Dendritic cell treated with granulocyte-macrophage colony-stimulating factor and Interleukin-4, amounts not matched to agents 40 ng/mL and 50 ng/mL, for 4 days (primary cell): ENCODE measurements at regions of chr1 and their contacts with region 1.

Region 1: GRCh38 chr1:112454316-112454715 is 54.4 kb upstream of the WNT2B start:
- H3K4me3 Mint-ChIP-seq: no peak overlapping the region
- H3K27ac Mint-ChIP-seq: no peak overlapping the region
- H3K4me1 Mint-ChIP-seq: peaks cover 21% of the 10 kb centered on the region
- H3K27me3 Mint-ChIP-seq: no peaks in the 10 kb centered on the region

Region 2: DNA sequence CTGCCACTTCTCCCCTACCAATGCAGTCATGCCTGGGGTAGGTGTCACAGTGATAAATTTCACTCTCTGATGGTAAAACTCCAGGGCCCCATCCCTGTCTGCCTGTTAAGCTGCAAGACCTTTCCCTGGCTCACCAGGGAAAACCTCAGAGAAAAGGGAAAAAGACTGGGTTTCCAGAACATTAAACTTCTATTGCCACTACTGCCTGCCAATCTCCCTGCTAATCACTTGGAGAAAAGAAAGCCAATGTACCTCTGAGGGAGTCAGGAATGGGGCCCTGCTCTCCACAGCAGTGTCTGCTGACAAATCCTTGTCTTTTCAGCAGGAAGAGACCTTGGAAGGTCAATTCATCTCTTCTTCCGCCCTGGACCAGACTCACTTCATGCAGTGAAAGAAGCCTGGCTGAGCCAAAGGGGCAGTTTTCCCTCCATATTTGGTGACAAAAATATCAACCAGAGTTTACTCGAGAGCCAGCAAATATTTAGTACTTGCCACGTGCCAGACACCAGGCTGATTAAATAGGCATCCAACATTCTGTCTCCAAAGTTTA is 107.4 kb before region 1 on chr1:
- intact Hi-C with region 1: no loop called
- H3K4me3 Mint-ChIP-seq: no peak overlapping the region
- H3K27ac Mint-ChIP-seq: no peak overlapping the region
- H3K4me1 Mint-ChIP-seq: no peaks in the 10 kb centered on the region
- H3K27me3 Mint-ChIP-seq: peaks cover 10% of the 10 kb centered on the region

Region 3: GRCh38 chr1:112418099-112418892 is 36.0 kb before region 1 on chr1:
- intact Hi-C with region 1: loop called (anchors 2 kb)
- H3K4me3 Mint-ChIP-seq: no peak overlapping the region
- H3K27ac Mint-ChIP-seq: no peak overlapping the region
- H3K4me1 Mint-ChIP-seq: no peaks in the 10 kb centered on the region
- H3K27me3 Mint-ChIP-seq: no peaks in the 10 kb centered on the region